OCI-LY7 (cell line): ENCODE measurements at regions of chr21 and their contacts with region 1.

Region 1: GRCh38 chr21:42062236-42063022 is 8.7 kb upstream of the UMODL1 start:
- DNase-seq: peak; percentile 93
- H3K4me3 ChIP-seq: peak overlapping the region; percentile 68
- H3K27ac ChIP-seq: peak overlapping the region; percentile 93
- H3K4me1 ChIP-seq: peaks cover 75% of the 10 kb centered on the region
- CTCF ChIP-seq: no peak

Region 2: GRCh38 chr21:41419911-41420862 is 642.2 kb before region 1 on chr21:
- CTCF ChIA-PET with region 1: no interaction called
- POLR2A ChIA-PET with region 1: no interaction called
- intact Hi-C with region 1: loop called (anchors 10 kb)
- DNase-seq: peak; percentile 79
- H3K4me3 ChIP-seq: peak overlapping the region; percentile 70
- H3K27ac ChIP-seq: peak overlapping the region; percentile 27
- H3K4me1 ChIP-seq: peaks cover 34% of the 10 kb centered on the region
- CTCF ChIP-seq: no peak

Region 3: DNA sequence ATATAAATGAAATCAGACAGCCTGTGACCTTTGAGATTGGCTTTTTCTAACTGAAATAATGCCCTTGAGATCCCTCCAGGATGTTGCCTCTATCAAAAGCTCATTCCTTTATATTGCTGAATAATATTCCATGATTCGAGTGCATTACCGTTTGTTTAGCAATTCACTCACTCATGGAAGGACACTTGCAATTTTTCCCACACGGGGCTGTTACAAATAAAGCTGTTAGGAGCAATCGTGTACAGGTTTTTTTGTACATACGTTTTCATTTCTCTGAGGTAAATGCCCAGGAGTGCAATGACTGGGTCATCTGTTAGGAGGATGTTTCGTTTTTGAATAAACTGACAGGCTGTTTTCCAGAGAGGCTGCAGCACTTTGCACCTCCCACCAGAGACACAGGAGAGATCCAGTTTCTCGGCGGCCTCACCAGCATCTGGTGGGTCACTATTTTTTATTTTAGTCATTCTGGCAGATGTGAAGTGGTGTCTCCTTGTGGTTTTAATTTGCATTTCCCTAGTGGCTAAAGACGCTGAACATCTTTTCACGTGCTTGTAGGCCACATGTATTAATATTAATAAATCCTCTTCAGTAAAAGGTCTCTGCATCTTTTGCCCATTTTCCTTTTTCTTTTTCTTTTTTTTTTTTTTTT is 194.2 kb before region 1 on chr21:
- CTCF ChIA-PET with region 1: interaction called, 7 read pairs
- POLR2A ChIA-PET with region 1: interaction called, 3 read pairs
- intact Hi-C with region 1: loop called (anchors 2 kb)
- DNase-seq: peak; percentile 96
- H3K4me3 ChIP-seq: peak overlapping the region; percentile 58
- H3K27ac ChIP-seq: peak overlapping the region; percentile 96
- H3K4me1 ChIP-seq: peaks cover 98% of the 10 kb centered on the region
- CTCF ChIP-seq: no peak

Region 4: DNA sequence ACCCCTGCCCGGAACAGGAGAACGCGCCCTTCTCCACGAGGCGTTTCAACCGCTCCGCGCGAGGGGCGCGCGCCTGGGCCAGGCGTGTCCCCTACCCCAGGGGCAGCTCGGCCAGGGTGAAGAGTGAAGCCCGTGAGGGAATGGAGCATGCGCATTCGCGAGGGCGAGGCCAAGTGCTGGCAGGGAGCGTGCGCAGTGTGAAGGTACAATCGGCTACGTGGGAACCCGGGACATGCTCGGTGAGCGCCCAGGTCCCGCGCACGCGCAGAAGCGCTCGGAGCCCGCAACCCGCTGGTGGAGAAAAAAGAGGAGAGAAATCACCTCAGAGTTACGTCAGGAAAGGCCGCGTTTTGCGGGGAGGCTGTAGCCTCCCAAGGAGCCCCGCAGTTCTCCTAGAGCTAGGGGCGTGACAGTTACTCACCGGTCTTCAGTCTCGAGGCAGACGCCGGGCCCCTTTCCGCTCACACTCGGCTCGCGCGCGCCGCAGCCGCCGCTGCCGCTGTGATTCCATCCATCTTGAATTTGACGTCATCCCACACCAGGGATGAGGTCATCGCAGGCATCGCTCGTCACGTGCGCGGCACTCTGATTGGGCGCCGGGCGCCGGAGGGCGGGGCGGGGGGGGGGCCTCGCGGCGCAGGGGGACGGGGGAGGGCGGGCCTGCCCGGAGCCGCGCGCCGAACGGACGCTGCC is 52.5 kb before region 1 on chr21 and contains the start of gene ZBTB21:
- CTCF ChIA-PET with region 1: no interaction called
- POLR2A ChIA-PET with region 1: interaction called, 5 read pairs
- intact Hi-C with region 1: loop called (anchors 1 kb)
- DNase-seq: peak; percentile 98
- H3K4me3 ChIP-seq: peak within 1 kb of the TSS; percentile 79
- H3K27ac ChIP-seq: peak within 1 kb of the TSS; percentile 65
- H3K4me1 ChIP-seq: peaks cover 38% of the 10 kb centered on the region
- CTCF ChIP-seq: no peak
- total RNA-seq, gene ZBTB21: 10.0 and 12.4 TPM in 2 replicates

Region 5: GRCh38 chr21:42022906-42023305 is 39.5 kb before region 1 on chr21:
- CTCF ChIA-PET with region 1: no interaction called
- POLR2A ChIA-PET with region 1: no interaction called
- intact Hi-C with region 1: no loop called
- DNase-seq: no peak
- H3K4me3 ChIP-seq: no peak overlapping the region
- H3K27ac ChIP-seq: no peak overlapping the region
- H3K4me1 ChIP-seq: peaks cover 18% of the 10 kb centered on the region
- CTCF ChIP-seq: no peak

Region 6: GRCh38 chr21:42117229-42117966 is 55.0 kb after region 1 on chr21:
- CTCF ChIA-PET with region 1: no interaction called
- POLR2A ChIA-PET with region 1: interaction called, 4 read pairs
- intact Hi-C with region 1: loop called (anchors 2 kb)
- DNase-seq: peak; percentile 84
- H3K4me3 ChIP-seq: peak overlapping the region; percentile 10
- H3K27ac ChIP-seq: peak overlapping the region; percentile 93
- H3K4me1 ChIP-seq: peaks cover 70% of the 10 kb centered on the region
- CTCF ChIP-seq: peak; percentile 99

Region 7: GRCh38 chr21:42460391-42461204 is 398.2 kb after region 1 on chr21:
- CTCF ChIA-PET with region 1: no interaction called
- POLR2A ChIA-PET with region 1: no interaction called
- intact Hi-C with region 1: loop called (anchors 2 kb)
- DNase-seq: peak; percentile 95
- H3K4me3 ChIP-seq: peak overlapping the region; percentile 60
- H3K27ac ChIP-seq: peak overlapping the region; percentile 83
- H3K4me1 ChIP-seq: peaks cover 70% of the 10 kb centered on the region
- CTCF ChIP-seq: no peak

Region 8: GRCh38 chr21:43585924-43586424 is 1523.5 kb after region 1 on chr21:
- CTCF ChIA-PET with region 1: no interaction called
- POLR2A ChIA-PET with region 1: no interaction called
- intact Hi-C with region 1: no loop called
- DNase-seq: no peak
- H3K4me3 ChIP-seq: no peak overlapping the region
- H3K27ac ChIP-seq: no peak overlapping the region
- H3K4me1 ChIP-seq: no peaks in the 10 kb centered on the region
- CTCF ChIP-seq: no peak